ENCODE measurements at regions of chr1 and their contacts with region 1.

Region 1: GRCh38 chr1:76048926-76049325 is 25.6 kb upstream of the ST6GALNAC3 start:
- DNase-seq: no peak
- ATAC-seq: no peak
- H3K4me3 ChIP-seq: no peak overlapping the region
- H3K27ac ChIP-seq: no peak overlapping the region
- H3K4me1 ChIP-seq: no peaks in the 10 kb centered on the region
- H3K27me3 ChIP-seq: no peaks in the 10 kb centered on the region
- CTCF ChIP-seq: no peak
- POLR2A ChIP-seq: no peak
- RAD21 ChIP-seq: no peak

Region 2: DNA sequence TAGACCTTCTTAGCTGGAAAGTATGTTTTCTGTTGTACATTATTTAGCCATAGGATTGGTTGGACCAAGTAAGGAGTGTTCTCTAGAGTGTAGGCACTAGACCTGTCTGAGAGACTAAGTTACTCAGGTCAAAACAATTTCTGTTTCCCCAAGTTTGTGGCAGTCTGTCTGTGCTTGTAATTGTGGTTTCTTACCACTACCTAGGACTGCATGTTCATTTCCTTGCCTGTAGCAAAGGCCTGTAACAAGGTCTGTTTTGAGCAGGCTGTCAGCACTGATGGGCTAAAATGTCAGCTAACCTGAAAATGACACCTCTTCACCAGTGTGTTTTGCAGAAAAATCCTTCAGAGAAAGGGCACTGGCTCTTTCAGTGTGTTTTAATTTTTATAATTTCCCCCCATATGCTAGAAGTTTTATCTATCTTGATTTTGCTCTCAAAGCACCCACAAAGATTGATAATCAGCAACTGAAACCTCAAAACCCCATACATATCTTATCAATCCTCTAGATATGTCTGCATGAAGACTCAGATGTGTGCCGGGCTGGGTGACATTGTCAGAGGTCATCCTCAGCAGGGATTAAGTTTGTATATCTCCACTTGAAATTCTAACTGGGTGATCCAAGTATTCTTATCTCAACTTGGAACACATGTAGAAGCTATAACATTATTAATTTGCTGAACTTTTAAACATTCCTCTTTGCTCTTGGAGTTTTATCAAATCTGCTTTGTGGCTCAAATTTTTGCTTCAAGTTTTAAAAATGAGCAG is 25.1 kb before region 1 on chr1:
- CTCF ChIA-PET with region 1: no interaction called
- POLR2A ChIA-PET with region 1: no interaction called
- RAD21 ChIA-PET with region 1: no interaction called
- intact Hi-C with region 1: loop called (anchors 1 kb)
- DNase-seq: no peak
- ATAC-seq: no peak
- H3K4me3 ChIP-seq: no peak overlapping the region
- H3K27ac ChIP-seq: no peak overlapping the region
- H3K4me1 ChIP-seq: peaks cover 2 to 26% of the 10 kb centered on the region in 2 experiments; a peak in 3 of 4 replicates
- H3K27me3 ChIP-seq: no peaks in the 10 kb centered on the region
- CTCF ChIP-seq: no peak
- POLR2A ChIP-seq: no peak
- RAD21 ChIP-seq: no peak

Measured in HCT116 (cell line).